ENCODE measurements at regions of chr6 and their contacts with region 1.

Region 1: GRCh38 chr6:137218917-137219663 is at the start of gene IFNGR1:
- DNase-seq: peak; percentile 97 to 98 (median 98)
- ATAC-seq: peak; percentile 98
- H3K4me3 ChIP-seq: peak within 1 kb of the TSS; percentile 79
- H3K27ac ChIP-seq: peak within 1 kb of the TSS; percentile 77
- H3K4me1 ChIP-seq: peaks cover 10 to 39% of the 10 kb centered on the region in 2 experiments
- H3K27me3 ChIP-seq: no peaks in the 10 kb centered on the region
- CTCF ChIP-seq: 0 out of 6 replicates have a peak, but pooled peaks of 1 of the 3 experiments have one; percentile 1
- EP300 ChIP-seq: no peak
- POLR2A ChIP-seq: peak; percentile 88
- RAD21 ChIP-seq: no peak
- polyA plus RNA-seq, gene IFNGR1: 41.5 to 47.0 TPM

Region 2: DNA sequence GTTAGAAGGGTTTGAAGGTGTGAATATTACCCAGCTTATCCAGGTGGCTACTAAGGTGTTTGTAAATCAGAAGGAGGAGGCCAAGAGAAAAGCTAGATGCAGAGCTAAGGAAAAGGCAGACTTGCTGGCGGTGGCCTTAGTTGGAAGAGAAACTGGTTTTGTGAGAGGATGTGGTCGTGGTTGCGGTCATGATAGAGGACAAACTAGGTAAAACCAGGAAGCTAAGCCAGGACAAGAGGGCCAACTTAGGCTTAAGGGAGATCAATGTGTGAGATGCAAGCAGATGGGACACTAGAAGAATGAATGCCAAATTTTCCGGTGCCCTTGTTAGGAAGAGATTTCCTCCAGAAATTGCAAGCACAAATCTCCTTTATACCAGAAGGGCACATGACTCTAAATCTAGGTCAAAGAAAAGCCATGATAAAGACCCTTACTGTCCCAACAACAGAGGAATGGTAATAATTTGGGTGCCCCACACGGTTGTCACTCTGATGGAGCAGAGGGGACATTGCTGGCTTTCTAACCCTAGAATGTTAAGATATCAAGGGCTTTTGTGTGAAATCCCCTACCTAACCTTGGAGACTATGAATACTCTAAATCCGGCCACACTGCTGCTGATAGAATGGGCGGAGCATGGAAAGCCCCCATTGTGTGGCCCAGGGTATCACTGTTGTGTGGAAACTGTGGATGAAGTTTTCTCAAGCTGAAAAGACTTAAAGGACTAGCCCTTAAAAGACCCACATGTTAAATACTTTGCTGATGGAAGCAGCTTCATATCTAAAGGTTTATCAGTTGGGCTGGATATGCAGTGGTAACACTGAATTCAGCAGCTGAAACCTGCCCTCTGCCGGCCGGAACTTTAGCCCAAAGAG is 53.5 kb before region 1 on chr6:
- CTCF ChIA-PET with region 1: no interaction called
- POLR2A ChIA-PET with region 1: interaction called, 3 read pairs
- in situ Hi-C with region 1: no loop called
- intact Hi-C with region 1: loop called (anchors 1 kb)
- DNase-seq: peak in 3 of 4 experiments; percentile 28 to 76 (median 45)
- ATAC-seq: peak; percentile 78
- H3K4me3 ChIP-seq: no peak overlapping the region
- H3K27ac ChIP-seq: no peak overlapping the region
- H3K4me1 ChIP-seq: peaks cover 0 to 34% of the 10 kb centered on the region in 2 experiments; a peak in 4 of 5 replicates
- H3K27me3 ChIP-seq: no peaks in the 10 kb centered on the region
- CTCF ChIP-seq: peak; percentile 71 to 75 (median 73)
- EP300 ChIP-seq: no peak
- POLR2A ChIP-seq: no peak
- RAD21 ChIP-seq: peak; percentile 82 to 88; a peak in 3 of 4 replicates

Region 3: DNA sequence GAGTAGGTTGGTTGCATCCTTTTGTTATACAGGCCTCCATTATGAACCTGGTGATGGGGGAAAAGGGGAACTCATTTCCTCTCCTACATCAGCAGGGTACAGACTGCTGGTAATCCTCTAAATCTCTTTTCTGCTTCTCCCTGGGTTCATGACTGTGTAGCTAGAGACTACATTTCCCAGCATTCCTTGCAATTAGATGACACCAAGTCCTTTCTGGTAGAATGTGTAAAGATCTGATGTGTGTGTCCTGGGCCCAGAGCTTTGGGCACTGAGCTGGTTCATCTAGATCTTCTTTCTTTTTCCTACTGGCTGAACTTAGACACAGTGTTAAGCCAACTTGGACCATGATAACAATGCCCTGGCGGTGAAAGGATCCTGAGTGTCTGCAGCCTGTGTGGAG is 104.8 kb after region 1 on chr6:
- CTCF ChIA-PET with region 1: no interaction called
- POLR2A ChIA-PET with region 1: no interaction called
- in situ Hi-C with region 1: no loop called
- intact Hi-C with region 1: no loop called
- DNase-seq: no peak
- ATAC-seq: peak; percentile 55; the same call in 2 of the 3 replicates
- H3K4me3 ChIP-seq: no peak overlapping the region
- H3K27ac ChIP-seq: no peak overlapping the region
- H3K4me1 ChIP-seq: no peaks in the 10 kb centered on the region
- H3K27me3 ChIP-seq: peaks cover 4 to 8% of the 10 kb centered on the region in 2 experiments; a peak in 4 of 5 replicates
- CTCF ChIP-seq: no peak
- EP300 ChIP-seq: no peak
- POLR2A ChIP-seq: no peak
- RAD21 ChIP-seq: no peak

Measured in K562 (cell line).